Gastrocnemius medialis (tissue), 4 donors: ENCODE measurements at regions of chr10 and their contacts with region 1.

Region 1: GRCh38 chr10:73650537-73651331 is 5.1 kb downstream of the SYNPO2L start:
- DNase-seq: peak; percentile 92 to 97
- ATAC-seq: peak; percentile 63 to 67
- H3K4me3 ChIP-seq: peak overlapping the region; percentile 15 to 48 (median 36)
- H3K27ac ChIP-seq: peak overlapping the region; percentile 96 to 99 (median 98)
- H3K4me1 ChIP-seq: peaks cover 77 to 81% of the 10 kb centered on the region in 2 donors
- H3K27me3 ChIP-seq: no peaks in the 10 kb centered on the region
- CTCF ChIP-seq: no peak
- POLR2A ChIP-seq: peak; percentile 13 to 38

Region 2: GRCh38 chr10:73730153-73730906 is 79.6 kb after region 1 on chr10:
- in situ Hi-C with region 1: no loop called
- intact Hi-C with region 1: loop called (anchors 2 kb)
- DNase-seq: peak; percentile 86 to 91
- ATAC-seq: peak; percentile 96 to 97
- H3K4me3 ChIP-seq: peak overlapping the region; percentile 59 to 89 (median 82)
- H3K27ac ChIP-seq: peak overlapping the region; percentile 92 to 96 (median 93)
- H3K4me1 ChIP-seq: peaks cover 28 to 29% of the 10 kb centered on the region in 2 donors
- H3K27me3 ChIP-seq: no peaks in the 10 kb centered on the region
- CTCF ChIP-seq: no peak
- POLR2A ChIP-seq: peak; percentile 72 to 85

Region 3: DNA sequence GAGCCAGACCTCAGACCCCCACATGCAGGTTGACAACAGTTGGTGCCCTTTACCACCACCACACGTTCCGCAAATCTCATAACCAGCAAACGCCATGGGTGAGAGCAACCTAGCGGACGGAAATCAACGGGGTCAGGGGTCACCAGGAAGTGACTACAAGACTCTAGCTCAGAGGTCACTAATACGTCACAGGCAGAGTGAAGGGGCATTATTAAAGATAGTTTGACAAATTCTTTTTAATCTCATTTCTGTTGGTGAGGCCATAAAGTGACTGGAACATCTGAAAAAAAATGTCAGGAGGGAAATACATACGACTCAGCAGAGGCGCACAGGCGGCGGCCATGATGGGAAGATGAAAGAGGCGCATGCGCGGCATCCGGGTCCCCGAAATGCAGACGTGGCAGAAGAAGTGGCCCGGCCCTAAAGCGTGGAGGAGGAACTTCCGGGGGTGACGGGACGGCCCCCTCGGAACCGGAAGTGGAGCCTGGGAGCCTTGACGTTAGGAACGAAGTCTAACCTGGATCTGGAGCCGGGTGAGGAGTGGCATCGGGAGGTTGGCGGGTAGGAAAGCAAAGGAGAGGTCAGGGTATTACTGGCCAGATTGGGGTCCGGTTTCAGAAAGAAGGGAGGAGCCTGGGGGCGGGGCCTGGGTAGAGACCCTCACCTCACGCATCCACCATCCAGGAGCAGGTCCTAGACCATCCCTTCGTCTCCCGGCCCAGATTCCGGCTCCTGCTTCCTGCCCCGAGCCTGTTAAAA is 93.3 kb after region 1 on chr10 and contains the start of gene SEC24C:
- in situ Hi-C with region 1: no loop called
- intact Hi-C with region 1: loop called (anchors 1 kb)
- DNase-seq: peak; percentile 94 to 95
- ATAC-seq: peak; percentile 96 to 97
- H3K4me3 ChIP-seq: peak within 1 kb of the TSS; percentile 74 to 93 (median 86)
- H3K27ac ChIP-seq: peak within 1 kb of the TSS; percentile 85 to 96 (median 90)
- H3K4me1 ChIP-seq: peaks cover 34 to 37% of the 10 kb centered on the region in 2 donors
- H3K27me3 ChIP-seq: no peaks in the 10 kb centered on the region
- CTCF ChIP-seq: peak in 1 of 5 experiments; percentile 16
- POLR2A ChIP-seq: peak; percentile 45 to 51
- total RNA-seq, gene SEC24C: 43.6 to 90.5 (median 69.6) TPM

Region 4: DNA sequence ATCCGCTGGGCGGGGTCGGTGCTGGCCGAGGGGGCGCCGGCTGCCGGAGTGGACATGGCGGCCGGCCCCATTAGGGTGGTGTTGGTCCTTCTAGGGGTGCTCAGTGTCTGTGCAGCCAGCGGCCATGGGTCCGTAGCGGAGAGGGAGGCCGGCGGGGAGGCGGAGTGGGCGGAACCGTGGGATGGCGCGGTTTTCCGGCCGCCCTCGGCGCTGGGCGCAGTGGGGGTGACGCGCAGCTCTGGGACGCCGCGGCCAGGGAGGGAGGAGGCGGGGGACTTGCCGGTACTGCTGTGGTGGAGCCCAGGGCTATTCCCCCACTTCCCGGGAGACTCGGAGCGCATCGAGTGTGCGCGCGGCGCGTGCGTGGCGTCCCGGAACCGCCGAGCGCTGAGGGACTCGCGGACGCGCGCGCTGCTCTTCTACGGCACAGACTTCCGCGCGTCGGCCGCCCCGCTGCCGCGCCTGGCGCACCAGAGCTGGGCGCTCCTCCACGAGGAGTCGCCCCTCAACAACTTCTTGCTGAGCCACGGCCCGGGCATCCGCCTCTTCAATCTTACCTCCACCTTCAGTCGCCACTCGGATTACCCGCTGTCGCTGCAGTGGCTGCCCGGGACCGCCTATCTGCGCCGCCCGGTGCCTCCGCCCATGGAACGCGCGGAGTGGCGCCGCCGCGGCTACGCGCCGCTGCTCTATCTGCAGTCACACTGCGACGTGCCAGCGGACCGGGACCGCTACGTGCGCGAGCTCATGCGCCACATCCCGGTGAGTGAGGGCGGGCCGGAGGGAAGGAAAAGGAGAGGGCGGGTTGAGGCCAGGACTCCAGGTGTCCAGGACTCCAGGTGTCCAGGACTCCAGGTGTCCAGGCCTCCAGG is 121.8 kb after region 1 on chr10:
- in situ Hi-C with region 1: no loop called
- intact Hi-C with region 1: no loop called
- DNase-seq: peak; percentile 72 to 87
- ATAC-seq: peak; percentile 77 to 80
- H3K4me3 ChIP-seq: peak overlapping the region; percentile 81 to 98 (median 89)
- H3K27ac ChIP-seq: peak overlapping the region; percentile 94 to 99 (median 98)
- H3K4me1 ChIP-seq: peaks cover 29 to 33% of the 10 kb centered on the region in 2 donors
- H3K27me3 ChIP-seq: no peaks in the 10 kb centered on the region
- CTCF ChIP-seq: peak in 4 of 5 experiments; percentile 9 to 45 (median 21)
- POLR2A ChIP-seq: peak; percentile 83 to 91

Region 5: DNA sequence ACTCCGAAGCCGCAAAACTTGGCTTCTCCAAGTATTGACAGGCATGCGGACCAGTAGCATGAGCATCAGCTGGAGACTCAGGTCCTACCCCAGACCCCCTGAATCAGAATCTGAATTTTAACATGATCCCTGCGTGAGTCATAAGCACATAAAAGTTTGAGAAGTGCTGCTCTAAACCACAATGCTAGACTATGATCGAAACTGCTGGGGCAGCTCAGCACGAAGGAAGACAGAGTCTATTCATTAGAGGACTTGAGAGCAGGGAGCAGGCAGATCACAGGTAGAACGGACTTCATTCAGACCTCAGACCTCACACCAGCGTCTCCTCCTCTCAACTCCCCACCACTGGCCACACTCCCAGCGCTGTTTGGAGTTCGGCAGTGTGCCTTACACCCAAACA is 206.7 kb after region 1 on chr10:
- in situ Hi-C with region 1: no loop called
- intact Hi-C with region 1: no loop called
- DNase-seq: no peak
- ATAC-seq: no peak
- H3K4me3 ChIP-seq: no peak overlapping the region
- H3K27ac ChIP-seq: peak overlapping the region in 1 of 4 donors; percentile 15
- H3K4me1 ChIP-seq: peaks cover 43 to 44% of the 10 kb centered on the region in 2 donors
- H3K27me3 ChIP-seq: no peaks in the 10 kb centered on the region
- CTCF ChIP-seq: no peak
- POLR2A ChIP-seq: no peak

Region 6: GRCh38 chr10:74011770-74012169 is 361.0 kb after region 1 on chr10:
- in situ Hi-C with region 1: no loop called
- intact Hi-C with region 1: no loop called
- DNase-seq: peak in 1 of 2 donors; percentile 39
- ATAC-seq: peak; percentile 60 to 77
- H3K4me3 ChIP-seq: no peak overlapping the region
- H3K27ac ChIP-seq: peak overlapping the region; percentile 15 to 68 (median 43)
- H3K4me1 ChIP-seq: peaks cover 49 to 53% of the 10 kb centered on the region in 2 donors
- H3K27me3 ChIP-seq: no peaks in the 10 kb centered on the region
- CTCF ChIP-seq: no peak
- POLR2A ChIP-seq: no peak

Region 7: DNA sequence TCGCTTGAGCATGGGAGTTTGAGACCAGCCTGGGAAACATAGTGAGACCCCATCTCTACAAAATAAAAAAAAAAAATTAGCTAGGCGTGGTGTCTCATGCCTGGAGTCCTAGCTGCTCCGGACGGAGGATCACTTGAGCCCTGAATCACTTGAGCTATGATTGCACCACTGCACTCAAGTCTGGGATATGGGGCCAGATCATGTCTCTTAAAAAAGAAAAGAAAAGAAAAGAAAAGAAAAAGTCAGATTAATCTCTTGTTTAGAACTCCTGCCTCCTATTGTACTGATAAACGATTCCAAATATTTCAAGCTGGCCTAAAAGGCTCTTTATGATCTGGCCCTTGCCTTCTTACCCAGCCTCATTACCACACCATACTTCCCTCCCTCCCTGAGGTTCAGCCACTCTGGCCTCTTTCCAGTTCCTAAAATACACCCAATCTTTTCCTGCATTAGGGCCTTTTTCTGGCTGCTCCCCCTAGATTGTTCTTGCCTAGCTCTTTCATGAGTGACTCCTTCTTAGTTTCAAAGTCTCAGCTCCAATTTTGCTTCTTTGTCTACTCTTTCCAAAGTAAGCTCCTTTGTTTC is 388.9 kb after region 1 on chr10:
- in situ Hi-C with region 1: no loop called
- intact Hi-C with region 1: loop called (anchors 10 kb)
- DNase-seq: peak; percentile 68 to 78
- ATAC-seq: peak; percentile 93 to 96
- H3K4me3 ChIP-seq: peak overlapping the region; percentile 22 to 46 (median 26)
- H3K27ac ChIP-seq: peak overlapping the region; percentile 93 to 97 (median 95)
- H3K4me1 ChIP-seq: peaks cover 66 to 76% of the 10 kb centered on the region in 2 donors
- H3K27me3 ChIP-seq: no peaks in the 10 kb centered on the region
- CTCF ChIP-seq: no peak
- POLR2A ChIP-seq: no peak